ENCODE measurements at regions of chr2 and their contacts with region 1.

Region 1: DNA sequence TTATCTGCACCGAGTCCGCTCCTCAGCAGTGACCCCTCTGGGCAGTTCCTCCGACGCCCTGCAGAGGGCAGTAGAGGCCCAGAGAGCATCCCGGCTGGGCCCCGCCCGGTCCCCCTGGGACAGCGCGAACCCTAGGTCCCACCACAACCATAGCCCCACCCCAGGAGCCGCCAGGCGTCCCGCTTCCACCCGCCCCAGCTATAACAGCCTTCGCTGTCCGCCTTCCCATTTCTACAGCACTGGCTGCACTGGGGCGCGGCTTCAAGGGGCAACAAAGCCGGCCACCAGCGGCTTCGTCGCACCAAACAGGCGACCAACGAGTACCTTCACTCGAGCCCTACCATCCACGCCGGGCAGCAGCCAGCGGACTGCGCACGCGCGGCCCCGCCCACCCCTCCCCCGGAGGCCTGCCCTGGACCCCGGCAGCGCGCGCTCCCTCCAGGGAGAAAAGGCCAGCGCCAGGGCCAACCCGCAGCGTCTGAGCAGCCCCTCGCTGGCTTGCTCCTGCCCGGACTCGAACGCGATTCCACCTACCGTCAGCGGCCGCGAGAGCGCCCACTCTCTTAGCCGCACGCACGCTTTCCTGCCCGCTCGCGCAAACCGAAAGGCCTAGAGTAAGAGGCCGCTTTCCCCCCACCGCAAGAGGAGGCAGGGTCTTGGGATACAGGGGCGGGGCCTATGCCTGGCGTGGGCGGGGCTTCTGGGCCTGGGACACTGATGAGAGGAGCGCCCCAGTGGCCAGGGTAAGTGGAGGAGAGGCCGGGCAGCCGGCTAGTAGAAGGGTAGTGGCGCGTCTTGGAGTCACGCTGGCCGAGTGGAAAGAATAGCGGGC is at the start of gene NHEJ1:
- DNase-seq: peak; percentile 98
- ATAC-seq: peak; percentile 86
- H3K4me3 ChIP-seq: peak within 1 kb of the TSS; percentile 39 to 84 (median 72)
- H3K4me3 Mint-ChIP-seq: peak within 1 kb of the TSS; percentile 98
- H3K27ac ChIP-seq: peak within 1 kb of the TSS; percentile 56 to 63
- H3K27ac Mint-ChIP-seq: peak within 1 kb of the TSS; percentile 97
- H3K4me1 ChIP-seq: peaks cover 9 to 13% of the 10 kb centered on the region in 2 donors
- H3K4me1 Mint-ChIP-seq: peaks cover 21% of the 10 kb centered on the region
- H3K27me3 ChIP-seq: no peaks in the 10 kb centered on the region
- H3K27me3 Mint-ChIP-seq: no peaks in the 10 kb centered on the region
- CTCF ChIP-seq: peak; percentile 97
- total RNA-seq, gene NHEJ1: 20.3 and 25.0 TPM in 2 replicates

Region 2: GRCh38 chr2:218429571-218430301 is 730.7 kb before region 1 on chr2:
- CTCF ChIA-PET with region 1: no interaction called
- POLR2A ChIA-PET with region 1: no interaction called
- intact Hi-C with region 1: no loop called
- DNase-seq: no peak
- ATAC-seq: no peak
- H3K4me3 ChIP-seq: no peak overlapping the region
- H3K4me3 Mint-ChIP-seq: no peak overlapping the region
- H3K27ac ChIP-seq: no peak overlapping the region
- H3K27ac Mint-ChIP-seq: no peak overlapping the region
- H3K4me1 ChIP-seq: no peaks in the 10 kb centered on the region
- H3K4me1 Mint-ChIP-seq: no peaks in the 10 kb centered on the region
- H3K27me3 ChIP-seq: peaks cover 0 to 9% (median 0%) of the 10 kb centered on the region in 4 experiments
- H3K27me3 Mint-ChIP-seq: peaks cover 10% of the 10 kb centered on the region
- CTCF ChIP-seq: no peak

Region 3: GRCh38 chr2:218568190-218569037 is 592.0 kb before region 1 on chr2 and contains the starts of genes CNOT9 and USP37:
- CTCF ChIA-PET with region 1: no interaction called
- POLR2A ChIA-PET with region 1: no interaction called
- intact Hi-C with region 1: loop called (anchors 5 kb)
- DNase-seq: peak; percentile 100
- ATAC-seq: peak; percentile 92
- H3K4me3 ChIP-seq: peak within 1 kb of the TSS; percentile 65 to 91 (median 84)
- H3K4me3 Mint-ChIP-seq: peak within 1 kb of the TSS; percentile 96
- H3K27ac ChIP-seq: peak within 1 kb of the TSS; percentile 93 to 95
- H3K27ac Mint-ChIP-seq: peak within 1 kb of the TSS; percentile 100
- H3K4me1 ChIP-seq: peaks cover 29 to 31% of the 10 kb centered on the region in 2 donors
- H3K4me1 Mint-ChIP-seq: peaks cover 56% of the 10 kb centered on the region
- H3K27me3 ChIP-seq: no peaks in the 10 kb centered on the region
- H3K27me3 Mint-ChIP-seq: no peaks in the 10 kb centered on the region
- CTCF ChIP-seq: no peak
- total RNA-seq, gene CNOT9: 54.5 and 66.9 TPM in 2 replicates
- total RNA-seq, gene USP37: 29.0 and 32.4 TPM in 2 replicates

Region 4: GRCh38 chr2:219171231-219171651 is 10.8 kb after region 1 on chr2:
- CTCF ChIA-PET with region 1: interaction called, 21 read pairs
- POLR2A ChIA-PET with region 1: interaction called, 8 read pairs
- intact Hi-C with region 1: loop called (anchors 1 kb)
- DNase-seq: peak; percentile 67
- ATAC-seq: peak; percentile 52
- H3K4me3 ChIP-seq: no peak overlapping the region
- H3K4me3 Mint-ChIP-seq: no peak overlapping the region
- H3K27ac ChIP-seq: peak overlapping the region in 1 of 2 donors; percentile 21
- H3K27ac Mint-ChIP-seq: peak overlapping the region; percentile 67
- H3K4me1 ChIP-seq: peaks cover 6 to 28% of the 10 kb centered on the region in 2 donors
- H3K4me1 Mint-ChIP-seq: peaks cover 25% of the 10 kb centered on the region
- H3K27me3 ChIP-seq: no peaks in the 10 kb centered on the region
- H3K27me3 Mint-ChIP-seq: no peaks in the 10 kb centered on the region
- CTCF ChIP-seq: peak; percentile 83

Region 5: GRCh38 chr2:219218732-219219701 is 58.6 kb after region 1 on chr2 and contains the start of gene ABCB6:
- CTCF ChIA-PET with region 1: interaction called, 65 read pairs
- POLR2A ChIA-PET with region 1: no interaction called
- intact Hi-C with region 1: loop called (anchors 2 kb)
- DNase-seq: peak; percentile 92
- ATAC-seq: peak; percentile 95
- H3K4me3 ChIP-seq: peak within 1 kb of the TSS; percentile 51 to 74 (median 66)
- H3K4me3 Mint-ChIP-seq: peak within 1 kb of the TSS; percentile 87
- H3K27ac ChIP-seq: peak within 1 kb of the TSS; percentile 0 to 55
- H3K27ac Mint-ChIP-seq: peak within 1 kb of the TSS; percentile 86
- H3K4me1 ChIP-seq: peaks cover 17 to 21% of the 10 kb centered on the region in 2 donors
- H3K4me1 Mint-ChIP-seq: peaks cover 20% of the 10 kb centered on the region
- H3K27me3 ChIP-seq: no peaks in the 10 kb centered on the region
- H3K27me3 Mint-ChIP-seq: no peaks in the 10 kb centered on the region
- CTCF ChIP-seq: no peak
- total RNA-seq, gene ABCB6: 10.5 and 12.3 TPM in 2 replicates

Region 6: GRCh38 chr2:219253753-219254590 is 93.6 kb after region 1 on chr2 and contains the start of gene TUBA4A:
- CTCF ChIA-PET with region 1: interaction called, 7 read pairs
- POLR2A ChIA-PET with region 1: no interaction called
- intact Hi-C with region 1: loop called (anchors 1 kb)
- DNase-seq: peak; percentile 93
- ATAC-seq: peak; percentile 72
- H3K4me3 ChIP-seq: peak within 1 kb of the TSS; percentile 83 to 97 (median 90)
- H3K4me3 Mint-ChIP-seq: peak within 1 kb of the TSS; percentile 87
- H3K27ac ChIP-seq: peak within 1 kb of the TSS; percentile 93 to 94
- H3K27ac Mint-ChIP-seq: peak within 1 kb of the TSS; percentile 96
- H3K4me1 ChIP-seq: peaks cover 34 to 44% of the 10 kb centered on the region in 2 donors
- H3K4me1 Mint-ChIP-seq: peaks cover 49% of the 10 kb centered on the region
- H3K27me3 ChIP-seq: no peaks in the 10 kb centered on the region
- H3K27me3 Mint-ChIP-seq: no peaks in the 10 kb centered on the region
- CTCF ChIP-seq: no peak
- total RNA-seq, gene TUBA4A: 196 and 213 TPM in 2 replicates

Region 7: GRCh38 chr2:219352448-219353023 is 192.1 kb after region 1 on chr2:
- CTCF ChIA-PET with region 1: interaction called, 3 read pairs
- POLR2A ChIA-PET with region 1: no interaction called
- intact Hi-C with region 1: loop called (anchors 1 kb)
- DNase-seq: peak; percentile 65
- ATAC-seq: peak; percentile 47
- H3K4me3 ChIP-seq: no peak overlapping the region
- H3K4me3 Mint-ChIP-seq: no peak overlapping the region
- H3K27ac ChIP-seq: no peak overlapping the region
- H3K27ac Mint-ChIP-seq: no peak overlapping the region
- H3K4me1 ChIP-seq: no peaks in the 10 kb centered on the region
- H3K4me1 Mint-ChIP-seq: no peaks in the 10 kb centered on the region
- H3K27me3 ChIP-seq: peaks cover 0 to 41% (median 7%) of the 10 kb centered on the region in 4 experiments
- H3K27me3 Mint-ChIP-seq: peaks cover 71% of the 10 kb centered on the region
- CTCF ChIP-seq: peak; percentile 72

Region 8: GRCh38 chr2:220533485-220533884 is 1373.1 kb after region 1 on chr2:
- CTCF ChIA-PET with region 1: no interaction called
- POLR2A ChIA-PET with region 1: no interaction called
- intact Hi-C with region 1: no loop called
- DNase-seq: no peak
- ATAC-seq: no peak
- H3K4me3 ChIP-seq: no peak overlapping the region
- H3K4me3 Mint-ChIP-seq: no peak overlapping the region
- H3K27ac ChIP-seq: no peak overlapping the region
- H3K27ac Mint-ChIP-seq: no peak overlapping the region
- H3K4me1 ChIP-seq: no peaks in the 10 kb centered on the region
- H3K4me1 Mint-ChIP-seq: no peaks in the 10 kb centered on the region
- H3K27me3 ChIP-seq: no peaks in the 10 kb centered on the region
- H3K27me3 Mint-ChIP-seq: no peaks in the 10 kb centered on the region
- CTCF ChIP-seq: no peak

Measured in B cell (primary cell).